ENCODE measurements at regions of chr20 and their contacts with region 1.

Region 1: DNA sequence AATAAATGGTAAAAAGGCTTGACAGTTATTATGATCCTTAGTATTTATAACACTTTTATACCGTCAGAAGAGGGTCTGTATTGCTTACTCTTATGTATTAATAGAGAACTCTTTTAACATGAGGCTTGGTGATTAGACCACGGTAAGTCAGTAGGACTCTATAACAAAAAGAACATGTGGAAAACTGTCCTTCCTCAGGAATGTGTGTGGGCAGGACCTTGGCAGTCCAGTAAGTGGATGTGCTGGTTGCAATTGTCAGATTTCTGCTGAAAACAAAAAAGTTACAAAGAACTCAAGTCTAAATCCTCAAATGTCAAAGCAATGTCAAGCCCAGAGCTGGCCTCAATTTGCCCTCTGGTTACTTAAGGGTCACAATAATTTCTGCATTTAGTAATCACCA is 81.1 kb downstream of the PLCG1 start:
- DNase-seq: no peak
- H3K4me3 ChIP-seq: no peak overlapping the region
- H3K27ac ChIP-seq: no peak overlapping the region
- H3K4me1 ChIP-seq: peaks cover 0 to 17% of the 10 kb centered on the region in 2 experiments; a peak in 3 of 4 replicates
- H3K27me3 ChIP-seq: no peaks in the 10 kb centered on the region
- CTCF ChIP-seq: no peak
- EP300 ChIP-seq: no peak
- RAD21 ChIP-seq: no peak

Region 2: DNA sequence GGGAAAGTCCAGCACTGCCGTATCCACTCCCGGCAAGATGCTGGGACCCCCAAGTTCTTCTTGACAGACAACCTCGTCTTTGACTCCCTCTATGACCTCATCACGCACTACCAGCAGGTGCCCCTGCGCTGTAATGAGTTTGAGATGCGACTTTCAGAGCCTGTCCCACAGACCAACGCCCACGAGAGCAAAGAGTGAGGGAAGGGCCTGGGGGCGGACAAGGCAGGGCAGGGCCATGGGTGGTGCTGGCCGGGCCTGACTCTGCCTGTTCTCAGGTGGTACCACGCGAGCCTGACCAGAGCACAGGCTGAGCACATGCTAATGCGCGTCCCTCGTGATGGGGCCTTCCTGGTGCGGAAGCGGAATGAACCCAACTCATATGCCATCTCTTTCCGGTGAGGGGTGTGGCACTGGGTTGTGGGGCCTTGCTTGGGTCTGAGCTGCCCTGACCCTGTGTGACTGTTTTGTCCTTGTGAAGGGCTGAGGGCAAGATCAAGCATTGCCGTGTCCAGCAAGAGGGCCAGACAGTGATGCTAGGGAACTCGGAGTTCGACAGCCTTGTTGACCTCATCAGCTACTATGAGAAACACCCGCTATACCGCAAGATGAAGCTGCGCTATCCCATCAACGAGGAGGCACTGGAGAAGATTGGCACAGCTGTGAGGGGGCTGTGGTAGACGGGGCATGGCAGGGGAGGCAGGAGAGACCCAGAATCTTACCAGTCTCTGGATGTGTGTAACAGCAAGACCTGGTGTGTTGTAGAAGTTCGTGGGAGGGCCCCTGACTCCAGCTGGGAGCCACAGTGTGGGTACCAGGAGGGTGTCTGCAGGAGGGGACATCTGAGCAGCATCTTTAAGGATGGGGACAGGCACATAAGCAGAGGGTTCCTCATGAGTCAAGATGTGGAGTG is 52.0 kb before region 1 on chr20:
- CTCF ChIA-PET with region 1: no interaction called
- POLR2A ChIA-PET with region 1: no interaction called
- DNase-seq: no peak
- H3K4me3 ChIP-seq: no peak overlapping the region
- H3K27ac ChIP-seq: no peak overlapping the region
- H3K4me1 ChIP-seq: no peaks in the 10 kb centered on the region
- H3K27me3 ChIP-seq: no peaks in the 10 kb centered on the region
- CTCF ChIP-seq: no peak
- EP300 ChIP-seq: no peak
- RAD21 ChIP-seq: no peak

Region 3: GRCh38 chr20:41232973-41233926 is 14.8 kb after region 1 on chr20:
- CTCF ChIA-PET with region 1: interaction called, 18 read pairs
- POLR2A ChIA-PET with region 1: no interaction called
- DNase-seq: no peak
- H3K4me3 ChIP-seq: no peak overlapping the region
- H3K27ac ChIP-seq: peak overlapping the region in 1 of 2 experiments; percentile 65; a peak in 3 of 4 replicates
- H3K4me1 ChIP-seq: peaks cover 7 to 21% of the 10 kb centered on the region in 2 experiments; a peak in 3 of 4 replicates
- H3K27me3 ChIP-seq: no peaks in the 10 kb centered on the region
- CTCF ChIP-seq: no peak
- EP300 ChIP-seq: no peak
- RAD21 ChIP-seq: no peak

Region 4: GRCh38 chr20:41261790-41262717 is 43.6 kb after region 1 on chr20:
- CTCF ChIA-PET with region 1: no interaction called
- POLR2A ChIA-PET with region 1: no interaction called
- DNase-seq: no peak
- H3K4me3 ChIP-seq: no peak overlapping the region
- H3K27ac ChIP-seq: no peak overlapping the region
- H3K4me1 ChIP-seq: no peaks in the 10 kb centered on the region; a peak in 1 of 4 replicates
- H3K27me3 ChIP-seq: no peaks in the 10 kb centered on the region
- CTCF ChIP-seq: no peak
- EP300 ChIP-seq: no peak
- RAD21 ChIP-seq: no peak

Region 5: DNA sequence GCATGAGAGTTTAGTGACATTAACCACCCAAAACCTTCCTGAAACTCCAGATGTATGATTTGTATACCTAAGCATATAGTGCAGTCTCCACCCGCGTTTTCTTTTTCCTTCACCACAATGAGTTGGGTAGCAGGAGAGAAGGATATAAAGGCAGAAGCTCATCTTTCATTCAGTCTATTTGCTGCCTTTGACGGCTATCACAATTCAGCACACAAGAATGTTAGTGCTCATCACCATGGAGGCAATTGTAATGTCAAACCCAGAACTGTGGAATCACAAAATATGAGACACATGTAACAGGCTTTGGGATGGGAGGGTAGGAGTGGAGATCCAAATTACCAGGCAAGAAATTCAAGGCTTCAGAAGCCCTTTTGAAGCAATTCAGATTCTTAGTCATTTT is 81.4 kb after region 1 on chr20:
- CTCF ChIA-PET with region 1: no interaction called
- POLR2A ChIA-PET with region 1: no interaction called
- DNase-seq: no peak
- H3K4me3 ChIP-seq: no peak overlapping the region
- H3K27ac ChIP-seq: no peak overlapping the region
- H3K4me1 ChIP-seq: no peaks in the 10 kb centered on the region
- H3K27me3 ChIP-seq: no peaks in the 10 kb centered on the region
- CTCF ChIP-seq: no peak
- EP300 ChIP-seq: no peak
- RAD21 ChIP-seq: no peak